Panc1 (cell line): ENCODE measurements at regions of chr5 and their contacts with region 1.

Region 1: DNA sequence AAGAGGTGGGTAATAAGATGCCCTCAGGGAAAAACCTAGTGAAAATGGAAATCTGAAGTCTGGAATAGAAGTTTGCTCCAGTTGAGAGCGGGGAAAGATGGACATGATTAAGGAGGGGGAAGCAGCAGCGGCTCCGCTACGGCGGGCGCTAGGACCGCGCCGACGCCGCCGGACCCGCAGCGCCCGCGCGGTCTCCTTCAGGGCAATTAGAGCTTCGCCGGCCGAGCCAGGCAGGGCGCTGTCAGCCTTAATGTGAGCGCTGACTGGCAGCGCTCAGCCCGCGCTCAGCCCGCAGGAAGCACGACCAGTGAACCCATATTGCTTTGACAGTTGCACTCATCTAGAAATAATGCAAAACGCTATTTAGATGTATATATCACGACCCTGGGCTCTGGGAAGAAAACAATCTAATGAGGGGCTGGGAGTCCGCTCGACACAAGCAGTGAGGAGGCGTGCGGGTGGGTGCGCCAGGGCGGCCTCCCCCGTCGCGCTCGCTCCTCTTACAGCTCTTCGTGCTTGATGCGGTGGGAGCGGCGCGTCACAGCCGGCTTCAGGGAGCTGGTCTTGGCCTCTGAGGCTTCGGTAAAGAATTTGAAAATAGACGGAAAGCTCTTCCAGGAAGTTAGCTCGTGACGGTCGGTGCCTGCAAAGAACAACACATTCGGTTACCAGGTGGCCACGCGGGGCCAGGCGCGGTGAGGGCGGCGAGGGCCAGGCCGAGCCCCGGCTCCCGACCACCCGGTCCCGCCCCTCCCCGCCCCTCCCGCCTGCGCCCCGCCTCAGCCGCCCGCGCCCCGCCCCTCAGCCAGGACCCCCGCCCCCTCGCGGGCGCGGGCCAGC is 37.7 kb downstream of the NR2F1 start:
- DNase-seq: no peak
- ATAC-seq: peak; percentile 91
- H3K4me3 ChIP-seq: peak overlapping the region; percentile 86 to 94
- H3K27ac ChIP-seq: peak overlapping the region; percentile 94
- H3K4me1 ChIP-seq: peaks cover 7% of the 10 kb centered on the region
- H3K27me3 ChIP-seq: no peaks in the 10 kb centered on the region
- CTCF ChIP-seq: peak; percentile 44

Region 2: DNA sequence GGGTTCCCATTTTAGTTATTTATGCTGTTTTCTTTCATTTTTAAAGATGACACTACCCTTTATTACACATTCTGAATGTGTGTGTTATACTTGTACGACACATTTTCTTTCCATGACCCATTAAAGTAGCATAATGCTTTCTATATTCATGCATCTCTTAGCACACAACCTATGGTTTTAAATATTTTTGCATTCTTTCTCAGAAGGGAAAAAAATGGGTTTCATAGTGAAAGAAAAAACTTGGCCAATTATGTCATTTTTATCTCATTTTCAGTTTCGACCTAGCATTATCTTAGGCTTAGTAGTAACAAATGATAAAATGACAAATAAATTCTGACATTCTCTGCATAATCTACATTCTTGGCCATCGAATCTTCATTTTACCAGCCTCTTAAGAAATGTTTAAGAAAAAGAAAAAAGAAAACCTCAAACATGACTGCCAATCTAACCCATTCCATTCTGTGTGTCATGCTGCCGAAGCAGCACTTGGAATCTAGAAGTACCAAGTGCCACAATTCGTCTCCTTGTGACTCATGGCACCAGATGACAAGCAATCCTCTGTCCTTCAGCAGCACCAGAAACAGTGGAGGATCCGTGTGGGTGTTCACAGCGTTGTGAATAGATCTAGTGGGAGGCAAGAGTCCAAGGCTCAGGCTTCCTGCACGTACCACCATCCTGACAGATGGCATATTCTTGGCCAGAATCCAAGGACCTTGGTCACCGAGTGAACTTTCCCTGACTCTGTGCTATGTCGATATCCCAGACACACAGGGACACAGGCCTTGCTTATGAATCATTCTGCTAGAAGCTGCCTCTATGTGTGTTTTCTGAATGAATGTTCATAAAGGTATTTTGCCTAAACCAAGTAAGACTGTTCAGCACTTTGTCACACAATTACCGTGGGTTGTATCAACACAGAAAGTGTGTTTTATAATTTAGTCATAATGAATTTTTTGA is 542.3 kb before region 1 on chr5:
- CTCF ChIA-PET with region 1: no interaction called
- POLR2A ChIA-PET with region 1: no interaction called
- in situ Hi-C with region 1: no loop called
- intact Hi-C with region 1: no loop called
- DNase-seq: peak; percentile 97
- ATAC-seq: peak; percentile 98
- H3K4me3 ChIP-seq: peak overlapping the region; percentile 5 to 28
- H3K27ac ChIP-seq: peak overlapping the region; percentile 91
- H3K4me1 ChIP-seq: peaks cover 18% of the 10 kb centered on the region
- H3K27me3 ChIP-seq: no peaks in the 10 kb centered on the region
- CTCF ChIP-seq: no peak

Region 3: GRCh38 chr5:93570294-93571113 is 50.2 kb before region 1 on chr5:
- CTCF ChIA-PET with region 1: no interaction called
- POLR2A ChIA-PET with region 1: no interaction called
- in situ Hi-C with region 1: no loop called
- intact Hi-C with region 1: no loop called
- DNase-seq: no peak
- ATAC-seq: no peak
- H3K4me3 ChIP-seq: no peak overlapping the region
- H3K27ac ChIP-seq: no peak overlapping the region
- H3K4me1 ChIP-seq: peaks cover 17% of the 10 kb centered on the region
- H3K27me3 ChIP-seq: no peaks in the 10 kb centered on the region
- CTCF ChIP-seq: no peak

Region 4: GRCh38 chr5:93800988-93801811 is 180.5 kb after region 1 on chr5:
- CTCF ChIA-PET with region 1: interaction called, 4 read pairs
- POLR2A ChIA-PET with region 1: no interaction called
- in situ Hi-C with region 1: loop called (anchors 25 kb)
- intact Hi-C with region 1: no loop called
- DNase-seq: peak; percentile 24
- ATAC-seq: peak; percentile 73
- H3K4me3 ChIP-seq: no peak overlapping the region
- H3K27ac ChIP-seq: peak overlapping the region; percentile 63; the same call in 1 of the 2 replicates
- H3K4me1 ChIP-seq: peaks cover 9% of the 10 kb centered on the region
- H3K27me3 ChIP-seq: no peaks in the 10 kb centered on the region
- CTCF ChIP-seq: peak; percentile 76

Region 5: DNA sequence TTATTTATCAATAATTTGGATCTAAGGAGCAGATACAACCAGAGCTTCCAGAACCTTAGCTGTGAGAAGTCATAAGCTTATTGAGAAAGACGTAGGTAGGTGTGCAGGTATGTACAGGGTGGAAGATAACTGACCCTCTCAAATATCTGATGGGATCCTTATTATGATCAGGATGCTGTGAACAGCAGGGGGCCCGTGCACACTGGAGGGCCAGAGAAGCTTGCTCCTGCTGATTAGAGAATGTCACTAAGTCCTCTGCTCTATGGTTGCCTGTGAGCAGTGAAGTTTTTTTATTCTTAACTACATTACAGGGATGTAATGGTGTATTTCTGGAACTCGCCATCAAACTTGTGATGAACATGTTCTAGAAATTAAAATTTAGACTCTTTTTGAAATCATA is 229.6 kb after region 1 on chr5:
- CTCF ChIA-PET with region 1: no interaction called
- POLR2A ChIA-PET with region 1: interaction called, 11 read pairs
- in situ Hi-C with region 1: no loop called
- intact Hi-C with region 1: no loop called
- DNase-seq: no peak
- ATAC-seq: no peak
- H3K4me3 ChIP-seq: no peak overlapping the region
- H3K27ac ChIP-seq: no peak overlapping the region
- H3K4me1 ChIP-seq: no peaks in the 10 kb centered on the region
- H3K27me3 ChIP-seq: no peaks in the 10 kb centered on the region
- CTCF ChIP-seq: no peak; the same call in 1 of the 2 replicates

Region 6: DNA sequence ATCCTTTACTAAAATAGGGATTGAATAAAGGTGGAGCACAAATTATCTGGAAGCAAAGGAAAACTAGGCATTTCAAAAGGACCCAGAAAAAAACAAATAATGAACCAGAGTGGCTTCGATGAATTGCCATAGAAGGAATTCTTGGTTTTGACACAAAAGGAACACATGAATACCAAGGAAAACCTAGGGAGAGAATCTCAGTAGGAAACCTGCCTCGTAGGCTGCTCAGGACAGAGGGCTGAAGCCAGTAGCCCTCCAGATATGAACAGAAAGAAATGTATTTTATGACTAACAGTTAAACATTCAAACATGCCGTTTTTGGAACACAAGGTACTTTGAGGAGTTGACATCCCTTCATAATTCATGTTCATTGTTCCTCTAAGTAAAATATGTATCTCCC is 1243.2 kb after region 1 on chr5:
- CTCF ChIA-PET with region 1: no interaction called
- POLR2A ChIA-PET with region 1: interaction called, 10 read pairs
- in situ Hi-C with region 1: no loop called
- intact Hi-C with region 1: no loop called
- DNase-seq: no peak
- ATAC-seq: no peak
- H3K4me3 ChIP-seq: no peak overlapping the region
- H3K27ac ChIP-seq: no peak overlapping the region
- H3K4me1 ChIP-seq: no peaks in the 10 kb centered on the region
- H3K27me3 ChIP-seq: no peaks in the 10 kb centered on the region
- CTCF ChIP-seq: no peak